Activated naive CD4-positive, alpha-beta T cell treated with anti-CD3 and anti-CD28 coated beads for 36 hours (primary cell): ENCODE measurements at regions of chrX and their contacts with region 1.

Region 1: GRCh38 chrX:40580537-40581335 is at the start of gene ATP6AP2:
- DNase-seq: peak; percentile 95
- H3K4me3 Mint-ChIP-seq: peak within 1 kb of the TSS; percentile 83
- H3K27ac Mint-ChIP-seq: peak within 1 kb of the TSS; percentile 85
- H3K4me1 Mint-ChIP-seq: peaks cover 26% of the 10 kb centered on the region
- H3K27me3 Mint-ChIP-seq: no peaks in the 10 kb centered on the region
- total RNA-seq, gene ATP6AP2: 47.4 to 53.9 TPM

Region 2: DNA sequence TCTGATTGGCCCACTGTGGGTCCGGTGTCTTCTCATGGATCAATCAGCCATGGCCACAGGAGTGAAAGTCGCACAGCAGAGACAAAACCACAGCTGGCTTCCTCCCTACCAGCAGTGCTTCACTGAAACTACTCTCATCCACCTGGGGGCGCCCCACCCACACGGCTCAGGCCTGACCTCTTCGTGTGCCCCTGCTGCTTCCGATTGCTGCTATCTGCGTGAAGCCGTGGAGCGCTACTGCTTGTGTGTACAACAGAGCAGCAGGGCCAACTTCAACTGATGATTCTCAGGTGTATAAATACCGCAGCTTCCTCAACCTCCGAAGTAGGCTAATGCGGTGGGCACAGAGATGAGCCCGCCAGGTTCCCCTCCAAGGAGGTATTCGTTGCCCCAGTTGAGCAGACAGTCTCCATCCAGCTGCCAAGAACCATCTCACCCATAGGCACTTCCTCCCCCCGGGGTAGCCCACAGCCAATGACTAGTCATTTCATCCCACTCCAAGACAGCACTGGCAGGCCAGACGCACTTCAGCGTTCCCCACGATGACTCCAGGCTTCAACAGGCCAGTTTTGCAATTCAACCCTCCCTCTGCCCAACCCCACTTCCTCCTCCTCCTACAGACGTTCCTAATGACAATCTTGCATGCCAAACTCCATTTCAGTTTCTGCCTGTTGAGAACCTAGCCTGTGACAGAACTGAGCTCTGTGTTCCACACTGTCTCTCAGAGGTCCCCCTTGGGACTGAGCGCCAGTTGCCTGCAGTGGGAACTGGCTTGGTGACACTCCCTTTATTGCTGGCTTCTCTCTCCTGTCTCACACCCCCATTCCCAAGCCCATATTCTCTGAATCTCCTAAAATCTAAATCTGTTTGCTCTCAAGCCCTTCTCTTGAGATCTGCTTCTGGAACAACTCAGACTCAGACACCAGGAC is 41.3 kb before region 1 on chrX:
- CTCF ChIA-PET with region 1: interaction called, 10 read pairs
- intact Hi-C with region 1: no loop called
- DNase-seq: peak; percentile 84
- H3K4me3 Mint-ChIP-seq: peak overlapping the region; percentile 32
- H3K27ac Mint-ChIP-seq: no peak overlapping the region
- H3K4me1 Mint-ChIP-seq: peaks cover 20% of the 10 kb centered on the region
- H3K27me3 Mint-ChIP-seq: peaks cover 3% of the 10 kb centered on the region

Region 3: GRCh38 chrX:40570346-40571093 is 10.2 kb before region 1 on chrX:
- CTCF ChIA-PET with region 1: no interaction called
- intact Hi-C with region 1: loop called (anchors 1 kb)
- DNase-seq: peak; percentile 22
- H3K4me3 Mint-ChIP-seq: peak overlapping the region; percentile 70
- H3K27ac Mint-ChIP-seq: peak overlapping the region; percentile 89
- H3K4me1 Mint-ChIP-seq: peaks cover 19% of the 10 kb centered on the region
- H3K27me3 Mint-ChIP-seq: no peaks in the 10 kb centered on the region

Region 4: GRCh38 chrX:40591126-40591525 is 10.4 kb after region 1 on chrX:
- CTCF ChIA-PET with region 1: interaction called, 3 read pairs
- intact Hi-C with region 1: loop called (anchors 1 kb)
- DNase-seq: no peak
- H3K4me3 Mint-ChIP-seq: no peak overlapping the region
- H3K27ac Mint-ChIP-seq: no peak overlapping the region
- H3K4me1 Mint-ChIP-seq: peaks cover 39% of the 10 kb centered on the region
- H3K27me3 Mint-ChIP-seq: no peaks in the 10 kb centered on the region

Region 5: GRCh38 chrX:40647307-40648197 is 66.8 kb after region 1 on chrX and contains the start of gene CXorf38:
- CTCF ChIA-PET with region 1: no interaction called
- intact Hi-C with region 1: loop called (anchors 1 kb)
- DNase-seq: peak; percentile 94
- H3K4me3 Mint-ChIP-seq: peak within 1 kb of the TSS; percentile 84
- H3K27ac Mint-ChIP-seq: peak within 1 kb of the TSS; percentile 91
- H3K4me1 Mint-ChIP-seq: peaks cover 25% of the 10 kb centered on the region
- H3K27me3 Mint-ChIP-seq: no peaks in the 10 kb centered on the region
- total RNA-seq, gene CXorf38: 23.2 to 23.3 TPM

Region 6: GRCh38 chrX:40735325-40736169 is 154.8 kb after region 1 on chrX and contains the start of gene MED14:
- CTCF ChIA-PET with region 1: no interaction called
- intact Hi-C with region 1: loop called (anchors 2 kb)
- DNase-seq: peak; percentile 90
- H3K4me3 Mint-ChIP-seq: peak within 1 kb of the TSS; percentile 85
- H3K27ac Mint-ChIP-seq: peak within 1 kb of the TSS; percentile 97
- H3K4me1 Mint-ChIP-seq: peaks cover 43% of the 10 kb centered on the region
- H3K27me3 Mint-ChIP-seq: no peaks in the 10 kb centered on the region
- total RNA-seq, gene MED14: 47.3 to 50.8 TPM

Region 7: DNA sequence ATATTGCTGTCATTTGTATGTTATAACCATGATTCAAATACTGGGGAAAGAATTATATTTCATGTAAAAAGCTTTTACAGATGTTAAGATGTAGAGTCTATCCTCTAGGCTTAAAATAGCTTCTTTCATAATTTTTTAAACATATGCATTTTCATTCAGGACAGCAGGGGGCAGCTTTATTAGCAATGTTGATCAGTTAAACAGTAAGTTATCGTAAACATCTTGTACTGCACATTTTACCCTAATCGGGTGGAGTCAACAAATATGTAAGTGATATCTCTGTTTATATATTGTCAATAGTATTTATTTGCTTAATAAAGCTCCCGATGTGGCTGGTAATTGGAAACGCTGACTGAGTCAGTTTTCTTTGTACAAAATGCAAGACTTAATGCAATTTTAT is 297.2 kb after region 1 on chrX:
- CTCF ChIA-PET with region 1: no interaction called
- intact Hi-C with region 1: loop called (anchors 10 kb)
- DNase-seq: no peak
- H3K4me3 Mint-ChIP-seq: no peak overlapping the region
- H3K27ac Mint-ChIP-seq: no peak overlapping the region
- H3K4me1 Mint-ChIP-seq: peaks cover 4% of the 10 kb centered on the region
- H3K27me3 Mint-ChIP-seq: no peaks in the 10 kb centered on the region